ENCODE measurements at regions of chr9 and their contacts with region 1.

Region 1: GRCh38 chr9:83649080-83649479 is 26.1 kb downstream of the IDNK start:
- DNase-seq: peak; percentile 67 to 86
- ATAC-seq: peak; percentile 92 to 98 (median 97)
- H3K4me3 ChIP-seq: no peak overlapping the region
- H3K4me3 Mint-ChIP-seq: no peak overlapping the region
- H3K27ac ChIP-seq: no peak overlapping the region
- H3K27ac Mint-ChIP-seq: no peak overlapping the region
- H3K4me1 ChIP-seq: no peaks in the 10 kb centered on the region
- H3K4me1 Mint-ChIP-seq: peaks cover 6 to 9% of the 10 kb centered on the region in 2 donors
- H3K27me3 ChIP-seq: no peaks in the 10 kb centered on the region
- H3K27me3 Mint-ChIP-seq: no peaks in the 10 kb centered on the region
- CTCF ChIP-seq: peak; percentile 80

Region 2: GRCh38 chr9:83622939-83623678 is 26.0 kb before region 1 on chr9 and contains the start of gene IDNK:
- intact Hi-C with region 1: loop called (anchors 1 kb)
- DNase-seq: peak; percentile 58 to 81
- ATAC-seq: peak; percentile 90 to 93 (median 90)
- H3K4me3 ChIP-seq: peak within 1 kb of the TSS; percentile 72
- H3K4me3 Mint-ChIP-seq: peak within 1 kb of the TSS; percentile 97
- H3K27ac ChIP-seq: peak within 1 kb of the TSS; percentile 81
- H3K27ac Mint-ChIP-seq: peak within 1 kb of the TSS; percentile 90 to 96
- H3K4me1 ChIP-seq: peaks cover 20% of the 10 kb centered on the region
- H3K4me1 Mint-ChIP-seq: peaks cover 24 to 32% of the 10 kb centered on the region in 2 donors
- H3K27me3 ChIP-seq: no peaks in the 10 kb centered on the region
- H3K27me3 Mint-ChIP-seq: peaks cover 0 to 4% of the 10 kb centered on the region in 2 donors
- CTCF ChIP-seq: no peak
- total RNA-seq, gene IDNK: 12.5 to 13.5 (median 13.0) TPM